PC-9 (cell line): ENCODE measurements at regions of chr22 and their contacts with region 1.

Region 1: GRCh38 chr22:36966851-36967540 is 52.3 kb downstream of the TST start:
- DNase-seq: no peak
- H3K4me3 ChIP-seq: no peak overlapping the region
- H3K27ac ChIP-seq: no peak overlapping the region
- H3K4me1 ChIP-seq: no peaks in the 10 kb centered on the region
- H3K27me3 ChIP-seq: no peaks in the 10 kb centered on the region
- CTCF ChIP-seq: no peak

Region 2: GRCh38 chr22:36867221-36867620 is 99.8 kb before region 1 on chr22:
- CTCF ChIA-PET with region 1: no interaction called
- POLR2A ChIA-PET with region 1: interaction called, 38 read pairs
- intact Hi-C with region 1: no loop called
- DNase-seq: no peak
- H3K4me3 ChIP-seq: no peak overlapping the region
- H3K27ac ChIP-seq: no peak overlapping the region
- H3K4me1 ChIP-seq: peaks cover 43% of the 10 kb centered on the region
- H3K27me3 ChIP-seq: no peaks in the 10 kb centered on the region
- CTCF ChIP-seq: no peak

Region 3: GRCh38 chr22:36901411-36902142 is 65.4 kb before region 1 on chr22:
- CTCF ChIA-PET with region 1: no interaction called
- POLR2A ChIA-PET with region 1: interaction called, 21 read pairs
- intact Hi-C with region 1: no loop called
- DNase-seq: no peak
- H3K4me3 ChIP-seq: no peak overlapping the region
- H3K27ac ChIP-seq: no peak overlapping the region
- H3K4me1 ChIP-seq: no peaks in the 10 kb centered on the region
- H3K27me3 ChIP-seq: no peaks in the 10 kb centered on the region; the same call in 1 of the 2 replicates
- CTCF ChIP-seq: no peak